Vagina (tissue), 2 donors: ENCODE measurements at regions of chr15 and their contacts with region 1.

Region 1: GRCh38 chr15:31488426-31489204 is 162.0 kb downstream of the KLF13 start:
- DNase-seq: peak; percentile 92 to 93
- H3K4me3 ChIP-seq: no peak overlapping the region
- H3K27ac ChIP-seq: peak overlapping the region; percentile 86
- H3K4me1 ChIP-seq: peaks cover 38% of the 10 kb centered on the region
- H3K27me3 ChIP-seq: no peaks in the 10 kb centered on the region
- CTCF ChIP-seq: peak; percentile 79 to 99 (median 97)
- POLR2A ChIP-seq: no peak

Region 2: DNA sequence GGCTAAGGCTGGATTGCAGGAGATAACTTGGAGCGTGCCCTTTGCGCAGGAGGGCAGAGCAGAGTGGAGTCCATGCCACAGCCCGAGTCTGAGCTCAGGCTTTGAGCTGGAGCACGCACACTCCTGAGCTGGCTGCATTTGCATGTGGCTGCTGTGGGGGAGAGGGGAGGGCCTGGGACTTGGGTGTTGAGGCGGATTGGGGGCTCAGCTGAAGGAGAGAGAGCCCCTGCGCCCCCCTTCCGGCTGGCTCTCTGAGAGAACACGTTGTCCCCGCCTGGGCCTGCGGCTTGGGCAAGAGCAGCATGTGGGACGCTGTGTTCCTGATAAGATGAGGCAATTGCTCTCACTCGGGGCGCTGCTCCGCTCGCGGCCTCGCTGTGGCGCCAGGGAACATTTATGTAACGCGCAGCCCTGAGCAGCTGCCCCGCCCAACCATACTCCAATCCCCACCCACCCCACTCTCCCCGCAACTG is 122.9 kb before region 1 on chr15:
- intact Hi-C with region 1: loop called (anchors 10 kb)
- DNase-seq: peak in 1 of 2 donors; percentile 98
- H3K4me3 ChIP-seq: peak overlapping the region; percentile 35 to 51
- H3K27ac ChIP-seq: peak overlapping the region; percentile 95
- H3K4me1 ChIP-seq: peaks cover 97% of the 10 kb centered on the region
- H3K27me3 ChIP-seq: no peaks in the 10 kb centered on the region
- CTCF ChIP-seq: peak in 1 of 3 experiments; percentile 35
- POLR2A ChIP-seq: no peak